ENCODE measurements at regions of chr5 and their contacts with region 1.

Region 1: DNA sequence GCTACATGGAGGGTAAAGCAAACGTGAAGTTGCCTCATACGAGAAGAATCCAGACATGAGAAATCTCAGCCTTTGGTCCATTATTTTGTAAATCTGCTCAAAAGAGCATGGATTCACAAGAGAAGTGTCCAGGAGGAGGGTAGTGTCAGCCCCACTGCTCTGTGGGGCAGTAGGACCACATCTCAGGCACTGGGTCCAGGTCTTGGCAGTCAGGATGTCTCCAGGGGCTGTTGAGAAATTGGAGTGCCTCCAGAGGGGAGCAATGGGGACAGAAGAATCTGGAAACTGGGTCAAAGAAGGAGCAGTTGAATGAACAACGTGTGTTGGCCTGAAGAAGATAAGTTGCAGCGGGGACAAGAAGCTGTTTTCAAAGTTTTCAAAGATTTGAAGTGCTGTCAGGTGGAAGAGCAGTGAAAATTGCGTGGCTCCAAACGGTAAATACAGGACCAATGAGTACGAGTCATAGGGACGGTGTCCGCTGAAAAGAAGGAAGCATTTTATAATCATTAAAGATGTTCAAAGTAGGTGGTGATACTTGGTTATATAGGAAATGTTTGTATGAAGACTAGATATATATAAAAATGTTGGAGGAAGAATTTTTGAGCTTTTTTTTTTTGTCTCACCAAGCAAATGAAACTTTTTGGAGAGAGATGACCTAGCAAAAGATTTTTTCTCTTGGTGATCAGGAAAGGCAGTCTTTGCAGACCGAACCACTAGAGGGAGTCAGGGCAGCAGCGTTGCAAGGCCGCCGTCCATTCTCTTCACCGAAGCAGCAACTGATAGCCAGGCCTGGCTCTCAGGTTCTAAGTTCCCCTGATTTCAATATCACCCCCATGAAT is 57.1 kb upstream of the ZBED3 start:
- DNase-seq: peak; percentile 66
- H3K4me3 ChIP-seq: no peak overlapping the region
- H3K27ac ChIP-seq: no peak overlapping the region
- H3K4me1 ChIP-seq: peaks cover 10% of the 10 kb centered on the region
- H3K27me3 ChIP-seq: no peaks in the 10 kb centered on the region
- CTCF ChIP-seq: peak; percentile 83 to 90
- POLR2A ChIP-seq: no peak

Region 2: DNA sequence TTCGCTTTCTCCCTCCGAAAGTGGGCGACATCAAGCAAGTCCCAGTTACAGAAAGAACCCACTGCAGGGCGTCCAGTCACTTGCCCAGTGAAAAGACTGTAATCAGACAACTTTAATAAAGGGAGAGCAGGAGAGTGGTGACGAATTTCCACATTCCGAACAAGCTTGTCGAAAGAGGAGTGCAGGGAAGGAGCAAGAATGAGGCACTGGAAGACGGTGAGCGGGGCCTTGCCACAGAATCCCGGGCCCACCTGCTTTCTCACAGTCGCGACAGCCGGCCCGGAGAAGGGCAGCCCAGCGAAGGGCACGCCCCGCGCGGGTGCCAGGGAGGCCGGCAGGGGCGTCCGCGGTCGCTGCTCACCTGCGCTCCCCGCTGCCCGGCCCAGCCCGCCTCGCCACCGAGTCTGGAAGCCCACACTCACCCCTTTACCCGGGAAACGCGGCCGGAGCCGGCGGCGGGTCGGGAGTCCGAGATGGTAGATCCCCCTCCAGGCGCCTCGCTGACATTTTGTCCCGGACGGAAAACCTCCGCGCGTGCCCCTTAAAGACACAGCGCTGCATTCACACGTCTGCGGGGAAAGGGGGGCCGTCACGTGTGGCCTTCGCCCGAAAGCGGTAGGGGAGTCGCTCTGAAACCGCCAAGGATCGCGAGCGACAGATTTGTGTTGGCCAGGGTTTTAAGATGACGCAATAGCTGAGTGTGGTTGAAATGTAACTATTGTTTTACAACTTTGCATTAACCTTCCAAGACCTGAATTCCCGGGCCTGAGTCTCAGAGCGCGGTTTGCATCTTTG is 57.3 kb before region 1 on chr5 and contains the start of gene ZBED3:
- CTCF ChIA-PET with region 1: no interaction called
- POLR2A ChIA-PET with region 1: no interaction called
- dilution Hi-C with region 1: no loop called
- intact Hi-C with region 1: loop called (anchors 2 kb)
- DNase-seq: peak; percentile 83
- H3K4me3 ChIP-seq: peak within 1 kb of the TSS; percentile 58 to 86 (median 76)
- H3K27ac ChIP-seq: peak within 1 kb of the TSS; percentile 82
- H3K4me1 ChIP-seq: peaks cover 16% of the 10 kb centered on the region
- H3K27me3 ChIP-seq: no peaks in the 10 kb centered on the region
- CTCF ChIP-seq: peak in 1 of 2 donors; percentile 16
- POLR2A ChIP-seq: peak; percentile 43
- total RNA-seq, gene ZBED3: 11.8 and 16.0 TPM in 2 replicates

Region 3: DNA sequence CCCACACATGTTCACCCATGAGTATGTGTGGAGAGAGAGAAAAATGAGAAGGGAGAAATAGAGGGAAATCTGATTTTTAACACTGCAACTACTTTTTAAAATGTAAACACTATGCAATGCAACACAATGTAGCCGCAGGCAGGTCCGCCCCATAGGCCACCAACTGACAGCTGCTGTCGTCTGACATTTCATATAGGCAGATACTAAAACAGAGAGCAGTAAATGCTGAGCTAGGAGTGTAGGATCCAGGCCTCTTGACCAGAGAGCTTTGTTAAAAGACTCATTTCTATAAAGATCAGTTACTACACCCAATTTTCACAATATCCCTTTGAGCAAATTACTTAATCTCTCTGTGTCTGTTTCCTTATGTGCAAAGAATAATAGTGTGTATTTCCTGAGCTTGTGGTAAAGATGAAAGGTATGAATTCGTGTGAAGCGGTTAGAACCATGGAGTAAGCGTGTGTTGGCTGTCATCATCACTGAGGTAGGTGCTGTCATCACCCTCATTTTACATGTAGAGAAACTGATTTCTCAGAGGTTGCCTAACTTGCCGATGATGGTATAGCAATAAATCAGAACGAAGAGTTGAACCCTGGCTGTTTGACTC is 11.1 kb after region 1 on chr5:
- CTCF ChIA-PET with region 1: interaction called, 11 read pairs
- POLR2A ChIA-PET with region 1: no interaction called
- dilution Hi-C with region 1: no loop called
- intact Hi-C with region 1: no loop called
- DNase-seq: no peak
- H3K4me3 ChIP-seq: no peak overlapping the region
- H3K27ac ChIP-seq: no peak overlapping the region
- H3K4me1 ChIP-seq: no peaks in the 10 kb centered on the region
- H3K27me3 ChIP-seq: peaks cover 0 to 1% of the 10 kb centered on the region in 2 experiments
- CTCF ChIP-seq: no peak
- POLR2A ChIP-seq: no peak

Region 4: DNA sequence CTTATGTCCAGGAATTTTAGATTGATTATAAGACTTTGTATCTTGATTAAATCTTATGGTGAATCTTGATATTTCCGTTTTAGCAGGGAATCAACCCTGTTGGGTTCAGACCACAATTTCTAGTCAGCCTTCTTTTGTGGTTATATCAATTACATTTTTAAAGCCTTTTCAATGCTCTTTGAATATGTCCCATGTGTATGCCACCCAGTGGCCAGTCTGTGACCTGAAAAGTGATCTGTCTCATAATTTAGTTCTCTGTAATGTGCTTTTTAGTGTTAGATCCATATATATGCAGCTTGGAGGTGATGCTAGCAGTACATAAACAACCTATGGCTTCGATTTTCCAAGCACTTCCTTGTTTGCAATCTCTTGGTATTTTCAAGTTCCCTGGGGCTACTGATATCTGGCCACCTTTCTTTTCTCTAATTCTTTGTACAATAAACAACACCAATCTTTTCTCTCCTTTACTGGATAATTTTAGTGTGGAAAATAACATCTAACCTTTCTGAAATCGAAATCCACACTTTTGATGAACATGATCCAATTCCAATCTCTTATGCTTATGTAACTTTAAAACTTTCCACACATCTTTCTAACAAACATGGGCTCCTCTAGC is 95.0 kb after region 1 on chr5:
- CTCF ChIA-PET with region 1: interaction called, 7 read pairs
- POLR2A ChIA-PET with region 1: no interaction called
- dilution Hi-C with region 1: no loop called
- intact Hi-C with region 1: loop called (anchors 1 kb)
- DNase-seq: peak; percentile 20
- H3K4me3 ChIP-seq: no peak overlapping the region
- H3K27ac ChIP-seq: no peak overlapping the region
- H3K4me1 ChIP-seq: no peaks in the 10 kb centered on the region
- H3K27me3 ChIP-seq: peaks cover 2 to 8% of the 10 kb centered on the region in 2 experiments
- CTCF ChIP-seq: peak; percentile 14 to 26
- POLR2A ChIP-seq: no peak

Region 5: DNA sequence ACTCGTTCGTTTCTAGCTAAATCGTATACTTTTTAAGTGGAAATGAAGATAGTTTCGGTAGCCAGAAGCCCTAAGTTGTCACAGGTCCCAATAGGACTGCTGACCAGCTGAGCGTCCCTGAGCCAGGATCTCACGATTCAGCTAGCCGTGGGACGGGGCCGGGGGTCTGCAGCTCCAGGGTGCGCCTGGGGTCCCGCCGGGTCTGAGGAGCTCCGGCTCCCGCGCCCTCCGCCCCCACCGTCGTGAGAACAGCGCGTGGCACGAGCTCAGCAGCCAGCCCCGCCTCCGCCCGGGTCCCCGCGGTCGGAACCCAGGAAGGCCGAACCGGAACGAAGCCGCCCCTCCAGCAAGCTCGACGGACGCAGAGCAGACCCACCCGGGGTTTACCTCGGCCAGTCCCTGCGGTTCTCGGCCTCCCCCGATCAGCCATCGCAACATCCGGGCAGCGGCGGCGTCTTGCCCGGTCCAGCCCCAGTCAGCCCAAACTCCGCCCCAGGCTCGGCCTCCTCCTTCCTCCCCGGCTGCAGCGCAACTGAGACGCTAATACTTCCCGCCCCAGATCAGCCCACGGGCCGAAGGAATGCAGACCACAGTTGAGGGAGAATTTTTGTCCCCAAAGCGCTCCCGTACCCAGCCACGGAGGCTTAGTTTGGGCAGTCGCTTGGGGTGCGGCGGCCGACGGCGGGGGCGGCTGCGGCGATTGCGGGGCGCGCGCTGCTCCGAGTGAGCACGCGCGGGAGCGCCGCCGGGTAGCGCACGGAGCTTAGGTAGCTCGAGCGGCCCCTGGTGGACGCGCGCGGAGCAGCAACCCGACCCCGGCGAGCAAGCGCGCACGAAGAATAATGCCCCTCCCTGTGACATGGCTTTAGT is 347.8 kb after region 1 on chr5 and contains the start of gene WDR41:
- CTCF ChIA-PET with region 1: interaction called, 15 read pairs
- POLR2A ChIA-PET with region 1: no interaction called
- dilution Hi-C with region 1: no loop called
- intact Hi-C with region 1: loop called (anchors 1 kb)
- DNase-seq: peak; percentile 96
- H3K4me3 ChIP-seq: peak within 1 kb of the TSS; percentile 89 to 94 (median 90)
- H3K27ac ChIP-seq: peak within 1 kb of the TSS; percentile 79
- H3K4me1 ChIP-seq: peaks cover 9% of the 10 kb centered on the region
- H3K27me3 ChIP-seq: peaks cover 12 to 25% of the 10 kb centered on the region in 2 experiments
- CTCF ChIP-seq: peak; percentile 93 to 94
- POLR2A ChIP-seq: peak; percentile 54
- total RNA-seq, gene WDR41: 23.9 and 33.6 TPM in 2 replicates